HEK293T (cell line): ENCODE measurements at regions of chr7 and their contacts with region 1.

Region 1: GRCh38 chr7:107743567-107744344 is at the start of gene CBLL1:
- DNase-seq: peak; percentile 88

Region 2: GRCh38 chr7:107242267-107242666 is 501.5 kb before region 1 on chr7:
- CTCF ChIA-PET with region 1: no interaction called
- POLR2A ChIA-PET with region 1: no interaction called
- DNase-seq: no peak

Region 3: GRCh38 chr7:107728281-107728680 is 15.5 kb before region 1 on chr7:
- CTCF ChIA-PET with region 1: interaction called, 4 read pairs
- POLR2A ChIA-PET with region 1: interaction called, 15 read pairs
- DNase-seq: no peak

Region 4: GRCh38 chr7:107879400-107880035 is 135.8 kb after region 1 on chr7:
- CTCF ChIA-PET with region 1: interaction called, 16 read pairs
- POLR2A ChIA-PET with region 1: interaction called, 5 read pairs
- DNase-seq: peak; percentile 50